ENCODE measurements at regions of chr5 and their contacts with region 1.

Region 1: GRCh38 chr5:154405078-154405792 is 40.6 kb upstream of the SAP30L start:
- DNase-seq: peak; percentile 89
- H3K4me3 ChIP-seq: peak overlapping the region in 1 of 2 donors; percentile 12
- H3K27ac ChIP-seq: no peak overlapping the region
- H3K4me1 ChIP-seq: peaks cover 10% of the 10 kb centered on the region
- H3K27me3 ChIP-seq: no peaks in the 10 kb centered on the region
- CTCF ChIP-seq: peak; percentile 52 to 76 (median 70)
- POLR2A ChIP-seq: no peak

Region 2: GRCh38 chr5:154072414-154073171 is 332.6 kb before region 1 on chr5:
- intact Hi-C with region 1: loop called (anchors 10 kb)
- DNase-seq: peak; percentile 89
- H3K4me3 ChIP-seq: no peak overlapping the region
- H3K27ac ChIP-seq: no peak overlapping the region
- H3K4me1 ChIP-seq: no peaks in the 10 kb centered on the region
- H3K27me3 ChIP-seq: no peaks in the 10 kb centered on the region
- CTCF ChIP-seq: peak; percentile 92 to 94 (median 93)
- POLR2A ChIP-seq: no peak

Region 3: DNA sequence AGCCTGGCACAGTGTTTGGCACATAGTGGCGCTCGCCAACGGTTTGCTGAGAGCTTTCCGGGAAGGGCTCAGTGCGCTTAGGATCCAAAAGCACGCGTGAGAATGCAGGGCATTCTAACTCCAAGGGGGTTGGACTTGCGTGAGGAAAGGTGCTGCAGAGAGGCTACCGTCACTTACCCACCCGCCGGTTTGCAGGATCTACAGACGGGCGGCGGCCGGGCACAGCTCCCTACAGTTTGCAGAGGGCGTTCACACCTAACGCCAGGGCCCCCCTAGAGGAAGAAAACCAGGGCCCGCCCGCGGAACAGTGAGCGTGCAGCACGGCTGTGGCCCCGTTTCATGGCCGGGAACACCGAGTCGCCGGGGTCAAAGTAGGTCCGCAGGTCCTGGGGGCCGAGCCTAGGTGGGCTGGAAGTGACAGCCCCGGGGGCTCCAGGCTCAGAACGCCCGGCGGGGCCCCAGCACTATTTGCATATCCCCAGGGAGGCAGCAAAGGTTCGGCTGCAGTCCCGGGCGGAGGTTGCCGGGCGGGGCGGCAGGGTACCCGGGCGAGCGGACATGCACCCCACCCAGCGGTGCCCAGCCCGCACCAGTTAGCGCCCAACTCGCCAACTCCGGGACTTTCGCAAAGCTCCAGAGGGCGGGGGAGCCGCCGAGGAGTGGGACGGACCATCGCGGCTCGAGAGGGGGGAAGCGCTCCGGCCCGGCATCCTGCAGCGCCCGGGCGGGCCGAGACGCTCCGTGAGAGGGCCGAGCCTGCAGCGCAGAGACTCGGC is 215.2 kb before region 1 on chr5:
- intact Hi-C with region 1: loop called (anchors 10 kb)
- DNase-seq: peak; percentile 77
- H3K4me3 ChIP-seq: peak overlapping the region; percentile 67 to 94
- H3K27ac ChIP-seq: peak overlapping the region; percentile 59 to 73
- H3K4me1 ChIP-seq: peaks cover 23% of the 10 kb centered on the region
- H3K27me3 ChIP-seq: no peaks in the 10 kb centered on the region
- CTCF ChIP-seq: peak in 2 of 3 experiments; percentile 15 to 49
- POLR2A ChIP-seq: no peak

Region 4: DNA sequence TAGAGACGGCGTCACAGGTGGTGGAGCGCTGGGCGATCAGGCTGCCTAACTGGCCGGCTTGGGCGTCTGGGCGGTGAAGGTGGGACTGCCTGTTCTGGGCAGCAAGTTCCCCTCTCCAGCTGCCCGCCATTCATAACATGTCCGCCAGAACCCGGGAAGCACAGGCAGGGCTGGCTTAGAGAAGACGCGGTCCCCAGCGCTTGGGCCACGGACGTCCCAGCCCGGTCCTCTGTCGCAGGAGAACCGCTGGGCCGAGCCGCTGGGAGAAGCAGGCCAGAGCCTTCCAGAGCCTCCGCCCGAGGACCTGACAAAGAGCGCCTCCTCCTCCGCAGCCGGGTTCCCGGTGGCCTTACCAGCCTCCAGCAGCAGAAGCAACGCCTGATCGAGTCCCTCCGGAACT is 88.0 kb after region 1 on chr5:
- intact Hi-C with region 1: no loop called
- DNase-seq: no peak
- H3K4me3 ChIP-seq: peak overlapping the region in 1 of 2 donors; percentile 35
- H3K27ac ChIP-seq: no peak overlapping the region
- H3K4me1 ChIP-seq: no peaks in the 10 kb centered on the region
- H3K27me3 ChIP-seq: no peaks in the 10 kb centered on the region
- CTCF ChIP-seq: no peak
- POLR2A ChIP-seq: no peak

Measured in testis (tissue), 5 donors.